CD4-positive, alpha-beta memory T cell (primary cell): ENCODE measurements at regions of chr9 and their contacts with region 1.

Region 1: GRCh38 chr9:100437860-100438805 is 11.2 kb downstream of the MSANTD3 start:
- DNase-seq: peak; percentile 52 to 69 (median 60)
- H3K4me3 ChIP-seq: no peak overlapping the region
- H3K4me3 Mint-ChIP-seq: no peak overlapping the region
- H3K27ac ChIP-seq: no peak overlapping the region
- H3K27ac Mint-ChIP-seq: no peak overlapping the region
- H3K4me1 ChIP-seq: no peaks in the 10 kb centered on the region
- H3K4me1 Mint-ChIP-seq: peaks cover 0 to 13% (median 12%) of the 10 kb centered on the region in 4 donors
- H3K27me3 ChIP-seq: no peaks in the 10 kb centered on the region
- H3K27me3 Mint-ChIP-seq: no peaks in the 10 kb centered on the region

Region 2: GRCh38 chr9:98796364-98797101 is 1641.6 kb before region 1 on chr9 and contains the start of gene ANKS6:
- CTCF ChIA-PET with region 1: no interaction called
- POLR2A ChIA-PET with region 1: no interaction called
- intact Hi-C with region 1: loop called (anchors 10 kb)
- DNase-seq: peak; percentile 63 to 88 (median 83)
- H3K4me3 ChIP-seq: peak within 1 kb of the TSS; percentile 42 to 67
- H3K4me3 Mint-ChIP-seq: peak within 1 kb of the TSS; percentile 84 to 91 (median 89)
- H3K27ac ChIP-seq: peak within 1 kb of the TSS; percentile 43
- H3K27ac Mint-ChIP-seq: peak within 1 kb of the TSS; percentile 43 to 84 (median 79)
- H3K4me1 ChIP-seq: peaks cover 17% of the 10 kb centered on the region
- H3K4me1 Mint-ChIP-seq: peaks cover 23 to 48% (median 31%) of the 10 kb centered on the region in 4 donors
- H3K27me3 ChIP-seq: no peaks in the 10 kb centered on the region
- H3K27me3 Mint-ChIP-seq: peaks cover 0 to under 1% of the 10 kb centered on the region in 2 donors
- total RNA-seq, gene ANKS6: 10.1 to 12.2 TPM

Region 3: DNA sequence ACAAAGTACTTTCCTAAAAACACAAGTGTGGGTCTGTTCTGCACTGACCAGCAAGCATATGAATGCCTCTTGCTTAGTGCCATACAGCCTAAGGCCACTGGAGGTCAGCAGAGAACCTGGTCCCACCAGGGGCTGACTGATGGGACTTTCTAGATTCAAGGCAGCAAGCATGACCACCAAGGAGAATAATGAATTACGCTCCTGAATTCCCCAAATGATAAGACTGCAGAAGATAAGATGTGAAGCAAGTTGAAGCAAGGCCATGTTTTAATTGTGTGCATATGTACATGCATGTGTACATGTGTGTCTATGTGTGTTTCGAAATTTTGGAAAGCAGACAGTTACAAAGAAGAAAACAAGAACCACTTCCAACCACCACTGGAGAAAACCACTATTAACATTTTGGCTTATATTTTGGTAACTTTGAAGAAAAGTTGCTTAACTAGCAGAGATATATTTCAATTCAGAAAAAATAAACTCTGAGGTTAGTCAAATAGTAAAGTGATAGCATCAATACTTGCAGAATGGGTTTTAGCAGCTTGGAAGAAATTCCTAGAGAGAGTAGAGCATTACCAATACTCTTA is 409.8 kb before region 1 on chr9:
- CTCF ChIA-PET with region 1: no interaction called
- POLR2A ChIA-PET with region 1: no interaction called
- intact Hi-C with region 1: loop called (anchors 1 kb)
- DNase-seq: peak; percentile 47 to 67 (median 58)
- H3K4me3 ChIP-seq: no peak overlapping the region
- H3K4me3 Mint-ChIP-seq: no peak overlapping the region
- H3K27ac ChIP-seq: no peak overlapping the region
- H3K27ac Mint-ChIP-seq: peak overlapping the region in 1 of 7 donors; percentile 57
- H3K4me1 ChIP-seq: no peaks in the 10 kb centered on the region
- H3K4me1 Mint-ChIP-seq: peaks cover 5 to 11% (median 7%) of the 10 kb centered on the region in 4 donors
- H3K27me3 ChIP-seq: no peaks in the 10 kb centered on the region
- H3K27me3 Mint-ChIP-seq: no peaks in the 10 kb centered on the region

Region 4: DNA sequence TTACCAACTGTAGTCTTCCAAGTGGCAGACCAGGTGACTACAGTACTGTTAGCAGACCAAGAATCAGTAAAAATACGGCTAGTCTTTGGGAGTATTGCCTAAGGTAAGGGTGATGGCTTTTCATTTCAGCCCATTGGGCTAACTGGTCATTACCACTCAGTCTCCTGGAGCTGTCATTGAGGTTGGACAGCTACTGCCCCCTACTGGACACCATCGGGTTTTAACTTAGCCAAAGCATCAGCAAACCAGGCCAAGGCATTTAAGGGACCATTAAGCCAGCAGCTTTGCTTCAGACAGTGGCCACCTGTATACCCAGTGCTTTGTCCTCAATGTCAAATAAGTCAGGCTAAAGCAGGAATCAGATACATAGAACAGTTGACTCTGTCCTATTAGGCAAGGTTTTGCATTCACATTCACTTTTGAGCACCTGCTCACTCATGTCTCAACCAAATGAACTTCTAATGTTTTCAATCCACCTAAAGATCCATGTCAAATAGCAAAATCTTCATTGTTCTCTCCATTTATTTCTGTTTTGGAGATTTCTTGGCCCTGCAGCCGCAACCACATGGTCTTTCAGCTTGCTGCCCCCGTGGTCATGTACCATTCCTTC is 221.8 kb before region 1 on chr9:
- CTCF ChIA-PET with region 1: no interaction called
- POLR2A ChIA-PET with region 1: no interaction called
- intact Hi-C with region 1: loop called (anchors 5 kb)
- DNase-seq: peak; percentile 39 to 51 (median 43)
- H3K4me3 ChIP-seq: no peak overlapping the region
- H3K4me3 Mint-ChIP-seq: no peak overlapping the region
- H3K27ac ChIP-seq: no peak overlapping the region
- H3K27ac Mint-ChIP-seq: no peak overlapping the region
- H3K4me1 ChIP-seq: no peaks in the 10 kb centered on the region
- H3K4me1 Mint-ChIP-seq: no peaks in the 10 kb centered on the region
- H3K27me3 ChIP-seq: no peaks in the 10 kb centered on the region
- H3K27me3 Mint-ChIP-seq: no peaks in the 10 kb centered on the region

Region 5: DNA sequence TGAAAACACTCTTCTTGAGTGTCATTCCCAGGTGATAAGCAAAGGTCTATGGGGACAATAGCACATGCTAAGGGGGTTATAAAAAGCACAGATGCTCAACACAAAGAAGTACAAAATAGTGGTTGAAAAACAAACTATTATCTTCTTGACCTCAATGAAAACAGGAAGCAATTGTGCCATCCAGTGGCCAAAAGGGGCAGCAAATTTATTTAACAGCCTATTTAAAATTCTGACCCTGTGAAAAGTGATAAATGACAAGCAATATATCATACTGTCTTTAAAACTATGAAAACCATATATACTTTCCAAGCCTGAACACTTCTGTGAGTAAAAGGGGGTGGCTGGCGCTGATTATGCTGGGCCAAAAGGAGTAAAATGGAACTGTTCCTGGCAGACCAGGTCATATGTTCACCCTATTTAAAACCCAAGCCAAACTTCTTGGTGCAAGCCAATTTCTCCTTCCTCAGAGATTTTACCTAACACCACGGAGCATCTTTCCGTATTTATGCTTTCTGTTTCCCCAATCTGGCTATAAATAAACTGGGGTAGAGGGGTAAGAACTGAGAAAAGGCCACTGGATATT is 115.1 kb before region 1 on chr9:
- CTCF ChIA-PET with region 1: interaction called, 11 read pairs
- POLR2A ChIA-PET with region 1: no interaction called
- intact Hi-C with region 1: no loop called
- DNase-seq: peak in 4 of 5 donors; percentile 8 to 26 (median 11)
- H3K4me3 ChIP-seq: no peak overlapping the region
- H3K4me3 Mint-ChIP-seq: no peak overlapping the region
- H3K27ac ChIP-seq: no peak overlapping the region
- H3K27ac Mint-ChIP-seq: peak overlapping the region in 3 of 7 donors; percentile 18 to 31 (median 19)
- H3K4me1 ChIP-seq: peaks cover 3% of the 10 kb centered on the region
- H3K4me1 Mint-ChIP-seq: peaks cover 12 to 13% (median 13%) of the 10 kb centered on the region in 4 donors
- H3K27me3 ChIP-seq: no peaks in the 10 kb centered on the region
- H3K27me3 Mint-ChIP-seq: no peaks in the 10 kb centered on the region

Region 6: GRCh38 chr9:100370064-100370723 is 67.9 kb before region 1 on chr9:
- CTCF ChIA-PET with region 1: interaction called, 4 read pairs
- POLR2A ChIA-PET with region 1: no interaction called
- intact Hi-C with region 1: loop called (anchors 5 kb)
- DNase-seq: no peak
- H3K4me3 ChIP-seq: no peak overlapping the region
- H3K4me3 Mint-ChIP-seq: no peak overlapping the region
- H3K27ac ChIP-seq: no peak overlapping the region
- H3K27ac Mint-ChIP-seq: no peak overlapping the region
- H3K4me1 ChIP-seq: no peaks in the 10 kb centered on the region
- H3K4me1 Mint-ChIP-seq: no peaks in the 10 kb centered on the region
- H3K27me3 ChIP-seq: no peaks in the 10 kb centered on the region
- H3K27me3 Mint-ChIP-seq: peaks cover 1 to 2% of the 10 kb centered on the region in 2 donors

Region 7: GRCh38 chr9:100426530-100427428 is 11.4 kb before region 1 on chr9 and contains the start of gene MSANTD3:
- CTCF ChIA-PET with region 1: interaction called, 22 read pairs
- POLR2A ChIA-PET with region 1: no interaction called
- intact Hi-C with region 1: no loop called
- DNase-seq: peak; percentile 39 to 57 (median 48)
- H3K4me3 ChIP-seq: peak within 1 kb of the TSS; percentile 64 to 72
- H3K4me3 Mint-ChIP-seq: peak within 1 kb of the TSS; percentile 94 to 99 (median 96)
- H3K27ac ChIP-seq: peak within 1 kb of the TSS; percentile 40
- H3K27ac Mint-ChIP-seq: peak within 1 kb of the TSS; percentile 92 to 97 (median 95)
- H3K4me1 ChIP-seq: peaks cover 26% of the 10 kb centered on the region
- H3K4me1 Mint-ChIP-seq: peaks cover 27 to 50% (median 35%) of the 10 kb centered on the region in 4 donors
- H3K27me3 ChIP-seq: no peaks in the 10 kb centered on the region
- H3K27me3 Mint-ChIP-seq: peaks cover 1% of the 10 kb centered on the region in 2 donors
- total RNA-seq, gene MSANTD3: 14.4 to 14.8 TPM

Region 8: DNA sequence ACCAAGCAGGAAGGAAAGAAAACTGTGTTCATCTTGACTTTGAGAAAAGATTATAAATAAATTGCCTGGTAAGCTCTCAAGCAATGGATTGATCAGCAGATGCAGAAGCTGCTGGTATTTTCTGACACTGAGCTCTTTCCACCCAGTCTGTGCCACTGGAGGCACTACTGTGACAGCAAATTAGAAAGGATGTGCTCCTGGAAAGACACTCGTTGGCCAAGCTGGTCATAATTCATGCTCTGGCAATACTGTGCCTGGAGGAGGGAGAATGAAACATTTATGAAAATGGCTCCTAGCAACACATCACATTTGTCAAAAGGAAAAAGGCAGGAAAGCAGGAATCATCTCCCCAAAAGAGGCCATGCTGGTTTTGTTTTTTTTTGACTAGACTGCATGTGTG is 224.0 kb after region 1 on chr9:
- CTCF ChIA-PET with region 1: no interaction called
- POLR2A ChIA-PET with region 1: no interaction called
- intact Hi-C with region 1: no loop called
- DNase-seq: no peak
- H3K4me3 ChIP-seq: no peak overlapping the region
- H3K4me3 Mint-ChIP-seq: no peak overlapping the region
- H3K27ac ChIP-seq: no peak overlapping the region
- H3K27ac Mint-ChIP-seq: no peak overlapping the region
- H3K4me1 ChIP-seq: no peaks in the 10 kb centered on the region
- H3K4me1 Mint-ChIP-seq: no peaks in the 10 kb centered on the region
- H3K27me3 ChIP-seq: no peaks in the 10 kb centered on the region
- H3K27me3 Mint-ChIP-seq: peaks cover 4 to 6% of the 10 kb centered on the region in 2 donors